AG04450 (cell line): ENCODE measurements at regions of chr2 and their contacts with region 1.

Region 1: GRCh38 chr2:175203621-175204496 is 22.3 kb upstream of the ATP5MC3 start:
- DNase-seq: peak; percentile 24
- H3K4me3 ChIP-seq: no peak overlapping the region
- H3K27ac ChIP-seq: no peak overlapping the region
- H3K27me3 ChIP-seq: peaks cover 6% of the 10 kb centered on the region
- CTCF ChIP-seq: peak; percentile 76

Region 2: DNA sequence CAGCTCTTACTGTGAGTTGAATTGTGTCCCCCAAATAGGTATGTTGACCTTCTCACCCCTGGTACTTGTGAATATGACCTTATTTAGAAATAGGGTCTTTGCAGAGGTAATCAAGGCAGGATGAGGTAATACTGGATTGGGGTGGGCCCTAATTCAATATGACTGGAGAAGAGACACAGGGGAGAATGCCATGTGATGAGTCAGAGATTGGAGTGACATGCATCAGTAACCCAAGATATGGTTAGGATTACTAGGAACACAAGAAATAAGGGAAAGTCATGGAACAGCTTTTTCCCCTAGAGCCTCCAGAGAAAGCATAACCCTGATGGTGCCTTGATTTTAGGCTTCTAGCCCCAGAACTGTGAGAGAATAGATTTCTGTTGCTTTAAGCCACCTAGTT is 14.7 kb after region 1 on chr2:
- CTCF ChIA-PET with region 1: interaction called, 12 read pairs
- POLR2A ChIA-PET with region 1: no interaction called
- DNase-seq: no peak
- H3K4me3 ChIP-seq: no peak overlapping the region
- H3K27ac ChIP-seq: no peak overlapping the region
- H3K27me3 ChIP-seq: no peaks in the 10 kb centered on the region
- CTCF ChIP-seq: no peak

Region 3: GRCh38 chr2:175275539-175275938 is 71.7 kb after region 1 on chr2:
- CTCF ChIA-PET with region 1: interaction called, 86 read pairs
- POLR2A ChIA-PET with region 1: no interaction called
- DNase-seq: no peak
- H3K4me3 ChIP-seq: no peak overlapping the region
- H3K27ac ChIP-seq: no peak overlapping the region
- H3K27me3 ChIP-seq: peaks cover 3% of the 10 kb centered on the region
- CTCF ChIP-seq: no peak

Region 4: GRCh38 chr2:175282290-175282689 is 78.4 kb after region 1 on chr2:
- CTCF ChIA-PET with region 1: interaction called, 86 read pairs
- POLR2A ChIA-PET with region 1: no interaction called
- DNase-seq: no peak
- H3K4me3 ChIP-seq: no peak overlapping the region
- H3K27ac ChIP-seq: no peak overlapping the region
- H3K27me3 ChIP-seq: peaks cover 8% of the 10 kb centered on the region
- CTCF ChIP-seq: peak; percentile 60

Region 5: DNA sequence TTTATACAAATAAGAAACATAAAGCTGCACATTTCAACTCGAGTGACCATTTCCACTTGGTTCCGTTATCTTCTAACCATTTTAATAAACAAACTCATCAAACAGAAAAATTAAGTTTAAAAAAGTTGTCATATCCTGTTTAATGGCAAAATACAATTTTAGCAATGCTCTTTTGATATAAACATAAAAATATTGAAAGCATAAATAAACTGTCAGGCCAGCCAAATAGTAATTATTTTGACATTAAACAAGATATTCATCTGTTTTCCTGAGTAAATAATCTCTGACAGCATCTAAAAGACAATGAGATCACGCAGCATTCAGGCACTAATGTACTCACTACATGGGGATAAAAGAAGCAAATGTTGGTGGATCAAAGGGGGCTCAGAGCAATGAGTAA is 122.9 kb after region 1 on chr2:
- CTCF ChIA-PET with region 1: interaction called, 24 read pairs
- POLR2A ChIA-PET with region 1: no interaction called
- DNase-seq: no peak
- H3K4me3 ChIP-seq: no peak overlapping the region
- H3K27ac ChIP-seq: no peak overlapping the region
- H3K27me3 ChIP-seq: no peaks in the 10 kb centered on the region
- CTCF ChIP-seq: no peak